ENCODE measurements at regions of chr18 and their contacts with region 1.

Region 1: DNA sequence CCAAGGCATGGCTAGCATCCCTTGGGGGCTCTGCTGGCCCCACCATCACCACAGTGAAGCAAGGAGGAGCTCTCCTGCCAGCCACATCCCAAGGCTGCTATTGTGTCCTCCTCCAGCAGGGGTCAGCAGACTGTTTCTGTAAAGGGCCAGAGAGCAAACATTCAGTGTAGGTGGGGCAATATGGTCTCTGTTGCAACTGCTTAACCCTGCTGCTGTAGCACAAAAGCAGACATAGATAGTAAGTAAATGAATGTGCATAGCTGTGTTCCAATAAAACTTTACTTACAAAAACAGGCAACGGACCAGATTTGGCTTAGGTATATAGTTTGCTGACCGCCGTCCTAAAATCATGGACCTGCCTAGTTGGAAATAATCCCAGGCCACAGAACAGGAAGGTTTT is 36.4 kb upstream of the ZBTB7C start:
- DNase-seq: peak; percentile 43 to 73 (median 59)
- H3K4me3 ChIP-seq: no peak overlapping the region
- H3K27ac ChIP-seq: no peak overlapping the region
- H3K4me1 ChIP-seq: peaks cover 6% of the 10 kb centered on the region
- H3K27me3 ChIP-seq: no peaks in the 10 kb centered on the region
- CTCF ChIP-seq: peak; percentile 29 to 51 (median 44)
- EP300 ChIP-seq: no peak
- POLR2A ChIP-seq: no peak

Region 2: DNA sequence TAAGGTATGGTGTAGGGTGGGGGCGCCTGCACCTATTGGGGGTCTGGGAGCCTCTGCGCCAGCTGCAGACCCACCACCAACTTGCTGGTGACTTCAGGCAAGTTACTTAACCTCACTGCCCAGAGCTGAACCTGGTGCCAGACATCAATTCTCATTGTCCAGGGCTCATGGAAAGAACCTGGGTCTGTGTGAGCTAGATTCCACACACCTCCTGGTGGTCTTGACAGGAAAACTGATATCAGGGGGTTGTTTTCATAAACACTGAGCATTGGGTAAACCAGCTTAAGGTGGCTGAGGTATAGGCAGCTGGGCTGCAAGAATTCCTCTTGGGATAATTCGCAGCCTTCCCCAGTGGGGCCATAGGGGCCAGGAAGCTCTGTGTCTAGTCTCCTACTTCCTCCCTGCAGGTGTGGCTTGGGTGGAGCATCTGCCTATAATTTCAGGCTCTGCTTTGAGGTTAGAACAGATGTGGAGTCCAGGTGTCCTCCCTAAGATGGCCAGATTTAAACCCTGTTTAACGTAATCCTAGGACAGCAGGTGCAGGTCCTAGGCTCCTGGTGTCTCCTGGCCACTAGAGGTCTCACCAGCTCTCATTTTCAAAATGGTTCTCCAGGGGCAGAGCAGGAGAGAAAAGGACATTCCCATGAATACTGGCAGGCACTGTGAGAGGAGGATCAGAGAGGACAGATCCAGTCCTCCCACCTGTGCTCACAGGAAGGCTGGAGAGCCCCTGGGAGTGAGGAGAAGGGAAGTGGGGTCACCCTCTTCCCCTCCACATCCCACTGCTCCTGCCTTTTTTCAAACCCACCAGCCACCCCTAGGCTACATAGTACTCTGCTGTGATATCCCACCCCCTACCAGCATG is 414.7 kb before region 1 on chr18:
- intact Hi-C with region 1: loop called (anchors 2 to 5 kb)
- DNase-seq: peak; percentile 61 to 76 (median 65)
- H3K4me3 ChIP-seq: no peak overlapping the region
- H3K27ac ChIP-seq: no peak overlapping the region
- H3K4me1 ChIP-seq: peaks cover 4% of the 10 kb centered on the region
- H3K27me3 ChIP-seq: no peaks in the 10 kb centered on the region
- CTCF ChIP-seq: peak; percentile 52 to 66 (median 66)
- EP300 ChIP-seq: no peak
- POLR2A ChIP-seq: no peak

Region 3: DNA sequence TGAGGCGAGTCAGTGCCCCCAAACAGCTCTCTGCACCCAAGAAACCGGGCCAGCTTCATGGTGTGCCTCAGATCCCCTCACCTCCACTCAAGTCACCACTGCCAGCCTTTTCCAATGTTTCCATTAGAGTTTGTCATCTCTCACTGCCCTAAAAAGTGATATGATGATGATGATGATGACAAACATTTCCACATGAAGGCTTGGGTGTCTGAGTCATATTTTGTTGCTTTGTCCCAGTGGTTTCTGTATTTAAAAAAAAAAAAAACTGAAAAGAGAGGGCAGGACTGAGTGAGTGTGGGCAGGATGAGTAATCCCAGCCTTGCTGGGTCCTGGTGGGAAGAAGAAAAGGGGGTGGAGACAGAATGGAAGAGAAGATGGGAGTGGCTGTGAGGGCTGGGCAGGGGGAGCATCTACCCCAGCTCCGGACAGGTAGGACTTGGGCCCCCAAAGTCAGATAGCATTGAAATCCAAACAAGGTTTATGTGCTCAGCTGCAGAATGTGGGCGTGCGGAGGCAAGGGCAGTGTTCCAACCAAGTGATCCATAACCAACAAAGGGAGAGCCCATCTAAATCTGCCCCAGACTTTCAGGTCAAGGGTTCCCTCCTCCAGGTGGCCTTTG is 115.0 kb before region 1 on chr18:
- intact Hi-C with region 1: loop called in 1 of 4 experiments (anchors 10 kb)
- DNase-seq: no peak
- H3K4me3 ChIP-seq: no peak overlapping the region
- H3K27ac ChIP-seq: no peak overlapping the region
- H3K4me1 ChIP-seq: no peaks in the 10 kb centered on the region
- H3K27me3 ChIP-seq: no peaks in the 10 kb centered on the region
- CTCF ChIP-seq: no peak
- EP300 ChIP-seq: no peak
- POLR2A ChIP-seq: no peak

Region 4: GRCh38 chr18:48345596-48345995 is 99.9 kb before region 1 on chr18:
- intact Hi-C with region 1: loop called in 1 of 4 experiments (anchors 5 kb)
- DNase-seq: no peak
- H3K4me3 ChIP-seq: no peak overlapping the region
- H3K27ac ChIP-seq: no peak overlapping the region
- H3K4me1 ChIP-seq: peaks cover 5% of the 10 kb centered on the region
- H3K27me3 ChIP-seq: no peaks in the 10 kb centered on the region
- CTCF ChIP-seq: no peak
- EP300 ChIP-seq: no peak
- POLR2A ChIP-seq: no peak

Region 5: GRCh38 chr18:48410095-48410920 is 35.2 kb before region 1 on chr18:
- intact Hi-C with region 1: loop called in 1 of 4 experiments (anchors 2 kb)
- DNase-seq: peak; percentile 92 to 95 (median 94)
- H3K4me3 ChIP-seq: peak overlapping the region; percentile 82
- H3K27ac ChIP-seq: peak overlapping the region in 1 of 2 donors; percentile 71
- H3K4me1 ChIP-seq: no peaks in the 10 kb centered on the region
- H3K27me3 ChIP-seq: no peaks in the 10 kb centered on the region
- CTCF ChIP-seq: peak in 1 of 3 donors; percentile 16
- EP300 ChIP-seq: no peak
- POLR2A ChIP-seq: peak; percentile 4

Measured in ovary (tissue), 10 donors.